Activated CD8-positive, alpha-beta memory T cell treated with anti-CD3 and anti-CD28 coated beads, Interleukin-2, amount 10 ng/mL, durations not matched to agents 7 days and 5 days (primary cell): ENCODE measurements at regions of chr3 and their contacts with region 1.

Region 1: DNA sequence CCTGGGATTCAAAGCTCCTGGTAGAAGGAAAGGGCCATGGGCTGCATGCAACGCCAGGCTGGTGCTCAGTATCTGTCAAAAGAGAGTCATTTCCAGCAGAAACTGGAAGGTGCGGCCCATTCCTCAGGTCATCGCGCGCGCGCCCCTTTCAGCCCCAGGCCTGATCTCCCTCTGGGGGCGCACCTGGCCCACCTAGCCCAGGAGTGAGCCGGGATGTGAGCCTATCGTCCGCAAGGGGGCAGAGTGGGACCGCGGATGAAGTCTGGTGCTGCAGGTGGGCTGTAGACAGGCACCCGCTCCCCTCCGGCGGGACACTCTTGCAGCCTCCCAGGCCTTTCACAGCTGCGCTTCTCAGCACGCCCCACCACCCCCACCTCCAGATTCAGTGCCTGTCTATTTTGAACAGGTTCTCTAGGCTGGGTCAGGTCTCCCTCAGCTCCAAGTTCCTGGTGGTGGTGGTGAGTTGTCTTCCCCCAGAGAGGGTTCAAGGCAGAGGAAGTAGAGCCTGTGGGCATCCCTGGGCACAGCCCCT is 5.8 kb upstream of the RPL29 start:
- DNase-seq: peak; percentile 91
- ATAC-seq: peak; percentile 98
- H3K4me3 Mint-ChIP-seq: no peak overlapping the region
- H3K27ac Mint-ChIP-seq: no peak overlapping the region
- H3K4me1 Mint-ChIP-seq: peaks cover 14% of the 10 kb centered on the region
- H3K27me3 Mint-ChIP-seq: peaks cover 13% of the 10 kb centered on the region

Region 2: DNA sequence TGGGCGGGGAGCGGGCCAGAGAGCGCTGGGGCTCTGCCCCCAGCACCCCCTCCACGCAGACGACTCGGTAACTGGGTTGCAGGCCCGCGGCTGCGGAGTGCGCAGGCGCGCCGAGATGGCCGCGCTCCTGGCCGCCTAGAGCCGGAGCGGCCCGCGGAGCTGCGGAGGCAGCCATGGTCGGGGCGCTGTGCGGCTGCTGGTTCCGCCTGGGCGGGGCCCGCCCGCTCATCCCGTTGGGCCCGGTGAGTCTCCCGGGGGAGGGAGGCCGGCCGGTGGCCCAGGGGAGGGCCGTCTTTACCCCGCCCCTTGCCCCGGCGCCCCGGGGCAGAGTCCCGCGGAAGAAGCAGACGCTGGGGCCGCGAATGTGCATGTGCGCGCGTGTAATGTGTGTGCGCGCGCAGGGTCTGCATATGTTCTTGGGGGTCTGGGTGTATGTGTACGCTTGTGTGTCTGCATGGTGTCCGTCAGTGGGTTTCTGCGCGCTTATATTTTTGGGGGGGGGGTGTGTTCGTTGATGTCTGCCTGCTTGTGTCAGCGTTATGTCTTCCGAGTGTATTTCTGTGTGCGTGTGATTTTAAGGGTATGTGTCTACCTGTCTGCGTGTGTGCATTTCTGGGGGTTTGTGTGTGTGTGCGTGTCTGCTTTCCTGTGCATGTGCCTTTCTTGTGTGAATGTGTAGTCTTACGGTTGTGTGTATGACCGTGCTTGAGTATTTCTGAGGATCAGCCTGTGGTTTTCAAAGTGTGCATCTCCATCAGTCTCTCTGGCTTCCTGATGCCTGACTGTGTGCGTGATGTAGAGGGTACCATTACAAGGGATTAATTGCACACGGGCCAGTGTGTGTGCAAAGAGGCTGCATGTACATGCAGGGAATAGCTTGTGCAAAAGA is 26.3 kb before region 1 on chr3 and contains the start of gene ABHD14A:
- CTCF ChIA-PET with region 1: interaction called, 16 read pairs
- DNase-seq: peak; percentile 77
- ATAC-seq: peak; percentile 83
- H3K4me3 Mint-ChIP-seq: peak within 1 kb of the TSS; percentile 98
- H3K27ac Mint-ChIP-seq: peak within 1 kb of the TSS; percentile 92
- H3K4me1 Mint-ChIP-seq: peaks cover 30% of the 10 kb centered on the region
- H3K27me3 Mint-ChIP-seq: no peaks in the 10 kb centered on the region
- total RNA-seq, gene ABHD14A: 11.8 to 13.7 TPM

Region 3: DNA sequence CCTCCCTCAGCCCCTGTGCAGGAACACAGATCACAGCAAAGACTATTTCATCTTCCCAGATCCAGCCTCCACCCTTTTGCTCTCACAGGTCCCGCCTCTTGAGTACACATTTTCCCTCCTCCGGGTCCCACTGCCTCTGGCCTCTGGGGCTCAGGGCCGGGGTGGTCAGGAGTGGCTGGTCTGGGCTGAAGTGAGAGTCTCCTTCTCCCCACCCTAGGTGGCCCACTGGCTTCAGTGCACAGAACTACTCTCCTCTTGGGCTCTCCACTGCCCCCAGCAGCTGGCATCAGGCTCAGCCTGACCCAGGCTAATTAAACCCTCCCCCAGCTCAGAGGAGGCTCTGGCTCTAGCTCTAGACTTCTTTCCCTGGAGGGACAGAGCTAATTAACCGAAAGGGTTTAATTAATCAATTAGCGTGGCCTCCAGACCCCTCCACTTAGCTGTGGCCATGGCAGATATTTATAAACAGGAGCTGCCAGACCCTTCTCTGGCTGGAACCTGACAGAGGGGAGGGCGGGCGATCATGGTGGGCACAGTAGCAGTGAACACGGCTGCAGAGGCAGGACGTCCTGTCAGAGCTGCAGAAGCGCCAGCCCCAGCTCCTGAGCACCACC is 39.7 kb after region 1 on chr3:
- CTCF ChIA-PET with region 1: interaction called, 12 read pairs
- DNase-seq: no peak
- ATAC-seq: no peak
- H3K4me3 Mint-ChIP-seq: no peak overlapping the region
- H3K27ac Mint-ChIP-seq: no peak overlapping the region
- H3K4me1 Mint-ChIP-seq: no peaks in the 10 kb centered on the region
- H3K27me3 Mint-ChIP-seq: no peaks in the 10 kb centered on the region

Region 4: DNA sequence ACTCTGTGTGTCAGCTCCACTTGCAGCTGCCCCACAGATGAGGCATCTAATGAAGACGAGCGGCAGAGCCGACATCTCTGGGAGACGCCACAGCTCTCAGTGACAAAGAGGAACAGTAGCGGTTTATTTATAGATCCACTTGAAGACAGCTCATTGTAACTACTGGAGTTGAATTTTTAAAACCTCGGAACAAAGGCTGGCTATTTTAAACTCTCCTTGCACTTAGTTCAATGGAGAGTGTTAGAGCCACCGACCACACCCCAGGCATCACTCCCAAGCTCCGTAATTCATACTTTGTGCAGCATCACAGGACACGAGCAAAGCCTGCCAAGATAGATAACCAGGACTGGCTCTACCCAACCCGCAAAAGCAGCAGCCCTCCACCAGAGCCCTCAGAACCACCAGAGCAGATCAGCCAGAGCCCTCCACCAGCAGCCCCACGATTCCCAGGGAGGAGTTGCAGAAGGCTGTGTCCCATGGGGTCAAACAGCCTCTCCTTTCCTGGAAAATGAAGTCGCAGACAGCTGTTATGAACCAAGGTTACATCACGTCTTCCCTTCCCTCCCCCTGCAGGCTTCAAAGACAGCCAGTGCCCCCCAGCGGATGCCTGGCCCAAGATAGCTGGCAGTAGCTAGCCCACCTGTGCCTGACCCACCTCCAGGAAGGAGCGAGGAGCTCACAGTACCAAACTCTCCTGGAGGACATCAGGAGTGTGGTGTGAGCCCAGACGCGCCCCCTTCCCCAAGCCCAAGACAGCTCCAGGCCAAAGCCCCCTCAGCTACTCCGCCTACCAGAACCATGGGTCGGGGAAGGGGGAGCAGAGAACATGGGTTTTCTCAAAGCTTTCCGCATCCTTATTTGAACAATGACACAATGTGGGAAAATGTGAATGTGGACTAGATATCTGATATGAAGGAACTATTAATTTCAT is 107.1 kb after region 1 on chr3:
- CTCF ChIA-PET with region 1: interaction called, 10 read pairs
- DNase-seq: no peak
- ATAC-seq: no peak
- H3K4me3 Mint-ChIP-seq: no peak overlapping the region
- H3K27ac Mint-ChIP-seq: no peak overlapping the region
- H3K4me1 Mint-ChIP-seq: no peaks in the 10 kb centered on the region
- H3K27me3 Mint-ChIP-seq: no peaks in the 10 kb centered on the region

Region 5: GRCh38 chr3:52134761-52135160 is 133.3 kb after region 1 on chr3:
- CTCF ChIA-PET with region 1: interaction called, 107 read pairs
- DNase-seq: no peak
- ATAC-seq: no peak
- H3K4me3 Mint-ChIP-seq: no peak overlapping the region
- H3K27ac Mint-ChIP-seq: no peak overlapping the region
- H3K4me1 Mint-ChIP-seq: peaks cover 18% of the 10 kb centered on the region
- H3K27me3 Mint-ChIP-seq: no peaks in the 10 kb centered on the region